A549 (cell line): ENCODE measurements at regions of chr11 and their contacts with region 1.

Region 1: GRCh38 chr11:18395735-18396504 is 1.6 kb downstream of the LDHA start:
- DNase-seq: peak; percentile 98 to 99
- ATAC-seq: peak; percentile 70 to 87
- H3K4me3 ChIP-seq: peak overlapping the region; percentile 97
- H3K27ac ChIP-seq: peak overlapping the region; percentile 95 to 97
- H3K4me1 ChIP-seq: peaks cover 74% of the 10 kb centered on the region
- CTCF ChIP-seq: no peak
- EP300 ChIP-seq: peak in 1 of 2 experiments; percentile 35; a peak in 2 of 5 replicates
- POLR2A ChIP-seq: peak; percentile 44
- RAD21 ChIP-seq: peak in 1 of 2 experiments; percentile 25; a peak in 1 of 5 replicates

Region 2: DNA sequence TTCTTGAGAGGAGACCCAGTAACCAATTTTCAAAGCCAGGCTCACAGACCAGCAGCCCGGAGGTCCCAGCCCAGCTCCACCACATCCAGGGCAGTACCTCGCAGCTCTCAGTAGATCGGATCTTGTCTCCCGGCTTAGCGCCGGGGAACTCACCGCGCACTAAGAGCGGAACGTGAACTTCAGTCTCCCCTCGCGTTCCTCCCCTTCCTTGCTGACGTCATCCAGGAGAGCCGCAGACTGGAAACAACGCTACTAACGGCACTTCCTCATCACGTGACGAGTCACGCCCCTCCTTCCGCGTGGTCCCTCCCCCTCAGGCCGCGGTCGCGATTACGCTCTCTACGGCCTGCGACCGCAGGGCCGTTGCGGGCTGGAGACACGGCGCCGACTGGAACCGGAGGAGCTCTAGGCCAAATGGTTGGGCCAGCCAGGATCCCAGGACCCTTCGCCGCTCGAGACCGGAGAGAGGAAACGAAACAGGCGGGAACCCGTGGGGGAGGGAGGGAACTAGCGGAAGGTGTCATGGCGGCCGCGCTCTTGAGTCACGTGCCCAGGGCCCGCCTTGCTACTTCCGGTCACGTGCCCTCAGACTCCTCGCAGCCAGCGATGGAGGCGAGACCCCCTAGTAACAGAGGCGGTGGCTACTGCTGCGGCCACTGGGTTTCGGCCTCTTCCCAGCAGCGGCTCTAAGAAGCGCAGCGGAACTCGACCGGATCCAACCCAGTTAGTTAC is 73.8 kb before region 1 on chr11 and contains the starts of genes GTF2H1 and HPS5:
- CTCF ChIA-PET with region 1: no interaction called
- POLR2A ChIA-PET with region 1: interaction called, 22 read pairs
- DNase-seq: peak; percentile 98 to 99
- ATAC-seq: peak; percentile 95 to 98
- H3K4me3 ChIP-seq: peak within 1 kb of the TSS; percentile 87
- H3K27ac ChIP-seq: peak within 1 kb of the TSS; percentile 96 to 98
- H3K4me1 ChIP-seq: peaks cover 46% of the 10 kb centered on the region
- CTCF ChIP-seq: no peak
- EP300 ChIP-seq: no peak
- POLR2A ChIP-seq: peak; percentile 98
- RAD21 ChIP-seq: 0 out of 5 replicates have a peak, but pooled peaks of 1 of the 2 experiments have one; percentile 12
- polyA plus RNA-seq, gene GTF2H1: 52.0 and 56.0 TPM in 2 replicates
- polyA plus RNA-seq, gene HPS5: 29.1 and 30.2 TPM in 2 replicates

Region 3: GRCh38 chr11:18368221-18368620 is 27.7 kb before region 1 on chr11:
- CTCF ChIA-PET with region 1: interaction called, 7 read pairs
- POLR2A ChIA-PET with region 1: interaction called, 12 read pairs
- DNase-seq: no peak
- ATAC-seq: peak; percentile 37 to 39; a peak in 3 of 6 replicates
- H3K4me3 ChIP-seq: no peak overlapping the region
- H3K27ac ChIP-seq: no peak overlapping the region
- H3K4me1 ChIP-seq: no peaks in the 10 kb centered on the region
- CTCF ChIP-seq: no peak
- EP300 ChIP-seq: no peak
- POLR2A ChIP-seq: no peak
- RAD21 ChIP-seq: no peak

Region 4: GRCh38 chr11:18383388-18384156 is 12.3 kb before region 1 on chr11:
- CTCF ChIA-PET with region 1: interaction called, 18 read pairs
- POLR2A ChIA-PET with region 1: interaction called, 170 read pairs
- DNase-seq: peak; percentile 96 to 98
- ATAC-seq: peak; percentile 91 to 93
- H3K4me3 ChIP-seq: peak overlapping the region; percentile 27
- H3K27ac ChIP-seq: peak overlapping the region; percentile 95 to 97
- H3K4me1 ChIP-seq: peaks cover 53% of the 10 kb centered on the region
- CTCF ChIP-seq: no peak
- EP300 ChIP-seq: peak in 1 of 2 experiments; percentile 33; a peak in 2 of 5 replicates
- POLR2A ChIP-seq: no peak; the same call in 1 of the 2 replicates
- RAD21 ChIP-seq: 0 out of 5 replicates have a peak, but pooled peaks of 1 of the 2 experiments have one; percentile 10

Region 5: DNA sequence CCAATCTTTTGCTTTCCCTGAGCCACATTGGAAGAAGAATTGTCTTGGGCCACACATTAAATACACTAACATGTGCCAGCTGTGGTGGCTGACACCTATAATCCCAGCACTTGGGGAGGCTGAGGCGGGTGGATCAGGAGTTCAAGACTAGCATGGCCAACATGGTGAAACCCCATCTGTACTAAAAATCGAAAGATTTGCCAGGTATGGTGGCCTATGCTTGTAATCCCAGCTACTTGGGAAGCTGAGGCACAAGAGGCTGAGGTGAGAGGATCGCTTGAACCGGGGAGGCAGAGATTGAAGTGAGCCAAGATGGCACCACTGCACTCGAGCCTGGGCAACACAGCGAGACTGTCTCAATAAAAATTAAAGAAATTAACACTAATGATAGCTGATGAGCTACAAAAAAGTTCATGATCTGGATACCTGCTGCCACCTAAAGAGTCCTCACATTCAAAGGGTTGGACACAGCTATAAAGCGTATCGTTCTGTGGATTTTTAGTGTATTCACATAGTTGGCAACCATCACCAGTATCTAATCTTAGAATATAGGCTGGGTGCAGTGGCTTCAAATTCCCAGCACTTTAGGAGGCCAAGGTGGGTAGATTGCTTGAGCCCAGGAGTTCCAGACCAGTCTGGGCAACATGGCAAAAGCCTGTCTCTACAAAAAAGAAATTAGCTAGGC is 12.8 kb after region 1 on chr11:
- CTCF ChIA-PET with region 1: interaction called, 6 read pairs
- POLR2A ChIA-PET with region 1: interaction called, 26 read pairs
- DNase-seq: peak in 1 of 2 experiments; percentile 32
- ATAC-seq: peak in 1 of 2 experiments; percentile 21; a peak in 3 of 6 replicates
- H3K4me3 ChIP-seq: no peak overlapping the region
- H3K27ac ChIP-seq: peak overlapping the region; percentile 38 to 76; a peak in 3 of 6 replicates
- H3K4me1 ChIP-seq: peaks cover 44% of the 10 kb centered on the region
- CTCF ChIP-seq: no peak
- EP300 ChIP-seq: no peak
- POLR2A ChIP-seq: no peak
- RAD21 ChIP-seq: no peak

Region 6: GRCh38 chr11:18526521-18527296 is 130.8 kb after region 1 on chr11 and contains the start of gene TSG101:
- CTCF ChIA-PET with region 1: interaction called, 3 read pairs
- POLR2A ChIA-PET with region 1: interaction called, 14 read pairs
- DNase-seq: peak; percentile 93 to 97
- ATAC-seq: peak; percentile 97 to 98
- H3K4me3 ChIP-seq: peak within 1 kb of the TSS; percentile 81
- H3K27ac ChIP-seq: peak within 1 kb of the TSS; percentile 92 to 96
- H3K4me1 ChIP-seq: peaks cover 46% of the 10 kb centered on the region
- CTCF ChIP-seq: no peak
- EP300 ChIP-seq: 0 out of 5 replicates have a peak, but pooled peaks of 1 of the 2 experiments have one; percentile 9
- POLR2A ChIP-seq: peak; percentile 91
- RAD21 ChIP-seq: no peak
- polyA plus RNA-seq, gene TSG101: 161 and 233 TPM in 2 replicates

Region 7: DNA sequence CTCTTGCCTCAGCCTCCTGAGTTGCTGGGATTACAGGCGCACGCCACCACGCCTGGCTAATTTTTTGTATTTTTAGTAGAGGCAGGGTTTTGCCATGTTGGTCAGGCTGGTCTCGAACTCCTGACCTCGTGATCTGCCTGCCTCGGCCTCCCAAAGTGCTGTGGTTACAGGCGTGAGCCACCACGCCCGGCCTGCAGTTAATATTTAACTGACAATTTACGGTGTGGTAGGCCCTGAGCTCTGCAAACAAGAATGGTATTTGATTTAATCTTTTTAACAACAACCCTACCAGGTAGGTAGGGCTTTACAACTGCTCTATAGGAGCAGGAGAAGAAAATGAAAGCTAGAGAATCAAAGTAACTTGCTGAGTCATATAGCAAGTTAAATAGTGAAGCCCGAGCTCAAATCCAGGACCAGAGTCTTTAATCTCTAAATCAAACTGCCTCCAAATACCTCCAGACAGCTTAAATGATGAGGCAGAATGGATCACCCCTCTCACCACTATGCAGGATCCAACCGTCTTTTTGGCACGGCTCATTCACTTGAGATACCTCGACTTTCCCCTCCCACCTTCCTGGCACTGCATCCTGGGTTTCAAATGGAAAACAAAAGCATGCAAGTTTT is 183.2 kb after region 1 on chr11:
- CTCF ChIA-PET with region 1: no interaction called
- POLR2A ChIA-PET with region 1: no interaction called
- DNase-seq: peak; percentile 43 to 84
- ATAC-seq: peak; percentile 77 to 89
- H3K4me3 ChIP-seq: peak overlapping the region; percentile 16
- H3K27ac ChIP-seq: peak overlapping the region; percentile 68 to 84
- H3K4me1 ChIP-seq: peaks cover 21% of the 10 kb centered on the region
- CTCF ChIP-seq: no peak
- EP300 ChIP-seq: no peak
- POLR2A ChIP-seq: no peak
- RAD21 ChIP-seq: no peak